ENCODE measurements at regions of chr13 and their contacts with region 1.

Region 1: GRCh38 chr13:97141564-97142005 is 80.5 kb upstream of the MBNL2 start:
- DNase-seq: peak; percentile 70 to 95
- H3K4me3 ChIP-seq: peak overlapping the region; percentile 62
- H3K27ac ChIP-seq: peak overlapping the region; percentile 79
- H3K4me1 ChIP-seq: peaks cover 51% of the 10 kb centered on the region
- H3K27me3 ChIP-seq: no peaks in the 10 kb centered on the region
- CTCF ChIP-seq: no peak

Region 2: DNA sequence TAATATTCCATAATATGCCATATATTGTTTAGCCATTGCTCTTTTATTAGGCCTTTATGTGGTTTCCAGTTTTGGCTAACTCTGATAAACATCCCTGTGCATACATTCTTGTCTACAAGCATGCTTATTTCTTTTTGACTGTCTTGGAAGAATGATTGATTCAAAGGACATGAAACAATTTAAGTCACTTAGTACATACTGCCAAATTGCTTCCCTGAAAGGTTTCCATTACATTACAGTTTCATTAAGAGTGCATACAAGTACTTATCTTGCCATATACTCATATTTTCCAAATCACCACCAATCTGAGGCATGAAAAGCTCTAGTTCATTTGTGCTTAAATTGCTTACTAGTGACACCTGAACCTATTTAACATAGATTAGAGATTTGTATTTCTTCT is 261.2 kb before region 1 on chr13:
- CTCF ChIA-PET with region 1: no interaction called
- POLR2A ChIA-PET with region 1: no interaction called
- intact Hi-C with region 1: no loop called
- DNase-seq: no peak
- H3K4me3 ChIP-seq: no peak overlapping the region
- H3K27ac ChIP-seq: no peak overlapping the region
- H3K4me1 ChIP-seq: no peaks in the 10 kb centered on the region
- H3K27me3 ChIP-seq: no peaks in the 10 kb centered on the region; the same call in 1 of the 2 replicates
- CTCF ChIP-seq: no peak

Region 3: DNA sequence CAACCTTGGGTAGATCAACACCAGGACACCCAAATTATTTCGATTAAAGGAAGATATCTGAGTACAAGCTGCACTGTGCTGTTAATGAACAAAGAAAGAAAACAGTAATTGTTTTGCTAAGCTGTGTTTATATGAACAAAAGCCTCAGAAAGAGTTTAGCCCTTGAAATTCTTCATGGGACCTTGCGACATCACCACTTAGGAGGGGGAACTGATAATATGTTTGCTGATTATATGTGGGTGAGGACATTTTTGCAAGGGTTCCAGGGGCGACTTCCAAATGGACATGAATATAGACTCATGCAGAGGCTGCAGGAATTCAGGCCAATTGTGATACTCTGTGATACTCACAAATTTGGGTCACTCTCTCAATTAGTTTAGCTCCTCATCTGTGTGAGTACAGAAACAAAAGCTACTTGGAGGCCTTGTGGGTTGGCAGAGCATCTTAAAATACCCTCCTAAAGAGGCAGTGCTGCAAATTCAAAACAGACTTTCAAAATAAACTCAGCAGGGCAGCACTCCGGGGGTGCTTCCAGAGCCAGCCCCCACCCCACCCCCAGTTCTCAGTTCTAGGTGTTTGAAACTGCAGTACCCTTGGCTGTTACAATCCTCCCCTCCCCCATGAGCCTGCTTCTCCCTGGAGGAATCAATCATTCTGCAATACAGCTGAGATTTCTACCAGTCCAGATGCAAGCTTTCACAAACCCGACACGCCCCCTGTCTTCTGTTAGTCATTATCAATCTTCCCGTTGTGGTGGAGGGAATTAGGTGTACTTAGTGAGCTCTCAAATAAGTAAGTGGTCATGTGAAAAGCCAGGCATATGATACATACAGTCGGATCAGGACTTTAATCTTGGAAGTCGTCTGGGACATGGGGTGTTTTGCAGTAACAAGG is 16.4 kb before region 1 on chr13:
- CTCF ChIA-PET with region 1: interaction called, 16 read pairs
- POLR2A ChIA-PET with region 1: interaction called, 6 read pairs
- intact Hi-C with region 1: loop called (anchors 1 kb)
- DNase-seq: peak; percentile 39 to 90
- H3K4me3 ChIP-seq: peak overlapping the region; percentile 37; the same call in 1 of the 2 replicates
- H3K27ac ChIP-seq: peak overlapping the region; percentile 81
- H3K4me1 ChIP-seq: peaks cover 81% of the 10 kb centered on the region
- H3K27me3 ChIP-seq: no peaks in the 10 kb centered on the region
- CTCF ChIP-seq: peak; percentile 55; the same call in 1 of the 2 replicates

Region 4: GRCh38 chr13:97174638-97175037 is 33.1 kb after region 1 on chr13:
- CTCF ChIA-PET with region 1: no interaction called
- POLR2A ChIA-PET with region 1: no interaction called
- intact Hi-C with region 1: loop called (anchors 5 kb)
- DNase-seq: no peak
- H3K4me3 ChIP-seq: no peak overlapping the region
- H3K27ac ChIP-seq: no peak overlapping the region
- H3K4me1 ChIP-seq: peaks cover 22% of the 10 kb centered on the region
- H3K27me3 ChIP-seq: no peaks in the 10 kb centered on the region
- CTCF ChIP-seq: no peak

Region 5: DNA sequence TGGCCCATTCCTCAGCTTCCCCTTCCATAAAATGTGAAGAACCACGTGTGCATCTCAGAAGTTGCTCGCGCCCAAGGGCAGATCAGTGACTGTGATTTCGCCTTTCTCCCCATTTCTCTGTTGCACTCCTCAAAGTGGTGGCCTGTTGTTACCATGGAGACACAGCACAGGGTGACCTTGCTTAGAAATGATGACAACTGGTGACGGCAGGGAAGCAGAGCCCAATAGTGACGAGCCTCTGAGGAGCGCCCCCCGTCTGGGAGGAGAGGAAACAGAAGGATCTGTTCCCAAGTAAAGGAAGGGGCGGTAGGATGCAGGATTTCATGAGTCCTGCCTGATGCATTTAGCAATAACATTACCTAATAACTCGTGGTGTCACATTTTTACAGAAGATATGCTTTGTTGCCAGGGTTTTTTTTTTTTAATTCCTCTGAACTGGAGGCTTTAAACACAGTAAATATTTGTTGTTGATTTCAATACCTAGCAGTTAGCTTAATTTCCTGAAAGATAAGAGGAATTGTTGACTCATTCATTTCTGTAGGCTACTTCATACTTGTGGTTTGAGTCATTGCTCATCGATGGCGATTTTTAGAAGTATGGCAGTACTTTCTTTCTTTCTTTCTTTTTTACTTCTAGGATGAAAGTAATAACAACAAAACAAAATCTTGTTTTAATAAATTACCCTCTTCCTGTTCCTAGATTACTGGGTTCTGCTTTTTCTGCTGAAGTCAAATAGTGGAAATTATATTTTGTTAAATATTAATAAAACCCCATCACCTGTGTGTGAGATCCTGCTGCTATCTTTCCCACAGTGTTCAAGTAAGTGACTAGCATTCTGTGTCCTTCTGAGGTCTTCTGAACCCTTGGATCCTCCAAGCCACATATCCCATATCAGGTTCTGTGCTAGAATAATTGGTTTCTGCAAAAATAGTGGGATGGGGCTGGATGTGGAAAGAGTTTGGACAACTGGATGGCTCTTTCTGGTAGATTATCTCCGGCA is 116.5 kb after region 1 on chr13:
- CTCF ChIA-PET with region 1: no interaction called
- POLR2A ChIA-PET with region 1: no interaction called
- intact Hi-C with region 1: loop called (anchors 5 kb)
- DNase-seq: peak; percentile 71 to 100
- H3K4me3 ChIP-seq: peak overlapping the region; percentile 34
- H3K27ac ChIP-seq: peak overlapping the region; percentile 98
- H3K4me1 ChIP-seq: peaks cover 82% of the 10 kb centered on the region
- H3K27me3 ChIP-seq: no peaks in the 10 kb centered on the region
- CTCF ChIP-seq: peak; percentile 56; the same call in 1 of the 2 replicates

Region 6: GRCh38 chr13:97289514-97290298 is 148.1 kb after region 1 on chr13:
- CTCF ChIA-PET with region 1: no interaction called
- POLR2A ChIA-PET with region 1: interaction called, 15 read pairs
- intact Hi-C with region 1: no loop called
- DNase-seq: no peak
- H3K4me3 ChIP-seq: no peak overlapping the region
- H3K27ac ChIP-seq: 0 out of 2 replicates have a peak overlapping the region, but pooled peaks have one; percentile 2
- H3K4me1 ChIP-seq: peaks cover 5% of the 10 kb centered on the region
- H3K27me3 ChIP-seq: no peaks in the 10 kb centered on the region
- CTCF ChIP-seq: no peak

Region 7: GRCh38 chr13:97302611-97303010 is 161.0 kb after region 1 on chr13:
- CTCF ChIA-PET with region 1: no interaction called
- POLR2A ChIA-PET with region 1: no interaction called
- intact Hi-C with region 1: no loop called
- DNase-seq: no peak
- H3K4me3 ChIP-seq: no peak overlapping the region
- H3K27ac ChIP-seq: peak overlapping the region; percentile 8; the same call in 1 of the 2 replicates
- H3K4me1 ChIP-seq: peaks cover 27% of the 10 kb centered on the region
- H3K27me3 ChIP-seq: no peaks in the 10 kb centered on the region
- CTCF ChIP-seq: no peak

Region 8: DNA sequence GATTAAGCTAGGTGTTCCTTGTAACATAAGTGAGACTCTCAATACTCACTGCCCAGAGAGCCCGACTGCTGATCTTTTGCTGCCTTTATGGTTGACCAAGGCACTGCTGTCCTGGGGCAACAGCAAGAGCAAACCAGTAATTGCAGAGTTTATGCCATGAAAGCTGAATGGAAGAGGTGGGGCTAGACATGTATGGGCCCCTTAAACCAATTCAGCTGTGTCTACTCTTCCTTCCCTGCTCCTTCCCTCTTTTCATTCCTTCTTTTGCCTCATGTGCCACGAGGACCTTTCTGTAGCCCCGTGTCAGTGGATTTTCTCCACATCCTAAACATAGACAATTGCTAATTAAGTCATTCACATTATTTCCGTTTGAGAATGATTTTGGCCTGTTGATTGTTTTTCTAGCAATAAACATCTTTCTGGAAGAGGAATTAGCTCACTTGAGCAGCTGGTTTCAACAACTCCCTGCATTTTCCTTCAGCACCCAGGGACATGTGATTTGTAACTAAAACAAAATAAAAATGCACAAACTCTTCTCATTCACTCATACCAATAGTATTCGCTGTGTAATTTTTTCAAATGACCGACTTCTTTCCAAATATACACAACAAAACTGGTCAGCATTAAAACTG is 332.9 kb after region 1 on chr13:
- CTCF ChIA-PET with region 1: no interaction called
- POLR2A ChIA-PET with region 1: no interaction called
- intact Hi-C with region 1: no loop called
- DNase-seq: no peak
- H3K4me3 ChIP-seq: no peak overlapping the region
- H3K27ac ChIP-seq: no peak overlapping the region
- H3K4me1 ChIP-seq: no peaks in the 10 kb centered on the region
- H3K27me3 ChIP-seq: no peaks in the 10 kb centered on the region
- CTCF ChIP-seq: no peak

Region 9: GRCh38 chr13:97686594-97686993 is 545.0 kb after region 1 on chr13:
- CTCF ChIA-PET with region 1: no interaction called
- POLR2A ChIA-PET with region 1: no interaction called
- intact Hi-C with region 1: no loop called
- DNase-seq: no peak
- H3K4me3 ChIP-seq: no peak overlapping the region
- H3K27ac ChIP-seq: no peak overlapping the region
- H3K4me1 ChIP-seq: no peaks in the 10 kb centered on the region
- H3K27me3 ChIP-seq: no peaks in the 10 kb centered on the region
- CTCF ChIP-seq: no peak